A549 (cell line): ENCODE measurements at regions of chr9 and their contacts with region 1.

Region 1: GRCh38 chr9:113632776-113633590 is 169.5 kb downstream of the RGS3 start:
- DNase-seq: no peak
- ATAC-seq: no peak
- H3K4me3 ChIP-seq: no peak overlapping the region
- H3K27ac ChIP-seq: no peak overlapping the region
- H3K4me1 ChIP-seq: no peaks in the 10 kb centered on the region
- CTCF ChIP-seq: no peak
- EP300 ChIP-seq: no peak
- POLR2A ChIP-seq: no peak
- RAD21 ChIP-seq: no peak

Region 2: DNA sequence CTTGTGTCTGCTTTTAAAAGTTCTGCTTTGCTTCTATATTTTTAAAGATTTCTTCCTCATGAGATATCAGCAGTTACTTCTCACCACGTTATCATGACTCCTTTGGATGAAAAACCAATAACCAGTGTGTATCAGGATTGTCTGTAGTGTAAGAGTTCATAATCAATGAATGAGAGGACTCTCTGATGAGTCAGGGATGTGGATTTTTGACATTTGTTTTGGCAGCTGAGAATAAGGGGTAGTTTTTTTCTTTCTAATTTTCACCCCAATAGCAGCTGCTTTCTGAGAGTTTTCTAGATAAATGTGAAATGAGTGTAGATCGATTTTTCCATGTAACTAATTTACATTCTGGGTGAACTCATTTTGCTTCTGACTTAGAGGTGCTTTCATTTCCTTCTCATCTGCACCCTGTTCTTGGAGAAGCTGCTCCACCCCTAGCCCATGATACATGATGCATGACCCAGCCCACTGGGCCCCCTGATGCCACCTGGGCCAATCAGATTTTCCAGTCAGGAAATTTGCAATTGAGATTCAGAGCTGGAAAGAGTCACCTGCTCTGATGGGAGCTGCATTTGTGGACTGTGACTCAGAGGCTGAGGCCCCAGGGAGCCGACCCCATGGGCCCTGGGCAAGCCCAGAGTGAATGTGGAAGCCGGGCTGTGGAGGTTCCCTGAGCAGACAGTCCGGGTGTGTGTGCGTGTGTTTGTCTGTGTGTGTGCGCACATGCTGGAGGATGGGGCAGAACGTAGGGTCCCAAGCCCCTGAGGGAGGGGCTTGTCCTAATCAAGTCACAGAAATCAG is 10.2 kb before region 1 on chr9:
- CTCF ChIA-PET with region 1: interaction called, 17 read pairs
- POLR2A ChIA-PET with region 1: no interaction called
- DNase-seq: peak; percentile 60 to 74
- ATAC-seq: peak; percentile 80 to 82
- H3K4me3 ChIP-seq: no peak overlapping the region
- H3K27ac ChIP-seq: peak overlapping the region; percentile 30 to 77; a peak in 5 of 6 replicates
- H3K4me1 ChIP-seq: peaks cover 43% of the 10 kb centered on the region
- CTCF ChIP-seq: no peak
- EP300 ChIP-seq: no peak
- POLR2A ChIP-seq: no peak
- RAD21 ChIP-seq: no peak